ENCODE measurements at regions of chr5 and their contacts with region 1.

Region 1: DNA sequence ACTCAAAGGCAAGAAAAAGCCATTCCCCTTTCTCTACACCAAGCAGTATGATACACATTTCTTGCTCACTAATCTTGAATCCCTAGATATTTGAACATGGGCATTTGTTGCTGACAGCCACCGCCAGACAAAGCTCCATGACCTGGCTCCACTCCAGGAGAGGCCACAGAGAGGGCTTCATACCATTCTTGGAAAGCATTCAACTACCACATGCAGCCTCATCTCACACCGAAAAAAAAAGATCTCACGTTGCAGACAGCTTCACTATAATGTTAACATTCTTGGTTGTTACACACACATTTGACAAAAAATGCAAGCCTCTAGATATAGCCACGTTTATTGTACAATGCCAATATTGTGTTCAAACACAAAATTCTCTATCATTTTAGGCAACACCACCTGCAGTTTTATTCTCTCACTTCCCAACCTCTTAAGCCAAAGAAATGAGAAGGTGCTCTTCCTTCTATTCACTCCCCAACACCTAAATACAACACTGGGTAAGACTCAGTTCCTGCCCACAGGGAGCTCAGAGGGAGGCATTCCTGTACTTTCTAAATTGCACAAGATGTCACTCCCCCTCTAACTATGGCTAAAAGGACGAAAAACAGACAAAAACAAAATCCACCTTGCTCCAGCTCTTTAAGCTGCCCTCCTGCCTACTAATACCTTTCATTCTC is 222.4 kb downstream of the TSSK1B start:
- DNase-seq: peak in 4 of 5 donors; percentile 43 to 72 (median 66)
- ATAC-seq: peak in 2 of 4 donors; percentile 30 to 67
- H3K4me3 ChIP-seq: no peak overlapping the region
- H3K27ac ChIP-seq: peak overlapping the region in 4 of 12 donors; percentile 5 to 47 (median 20)
- H3K4me1 ChIP-seq: peaks cover 5 to 77% (median 41%) of the 10 kb centered on the region in 12 donors
- H3K27me3 ChIP-seq: no peaks in the 10 kb centered on the region
- CTCF ChIP-seq: no peak
- POLR2A ChIP-seq: no peak

Region 2: DNA sequence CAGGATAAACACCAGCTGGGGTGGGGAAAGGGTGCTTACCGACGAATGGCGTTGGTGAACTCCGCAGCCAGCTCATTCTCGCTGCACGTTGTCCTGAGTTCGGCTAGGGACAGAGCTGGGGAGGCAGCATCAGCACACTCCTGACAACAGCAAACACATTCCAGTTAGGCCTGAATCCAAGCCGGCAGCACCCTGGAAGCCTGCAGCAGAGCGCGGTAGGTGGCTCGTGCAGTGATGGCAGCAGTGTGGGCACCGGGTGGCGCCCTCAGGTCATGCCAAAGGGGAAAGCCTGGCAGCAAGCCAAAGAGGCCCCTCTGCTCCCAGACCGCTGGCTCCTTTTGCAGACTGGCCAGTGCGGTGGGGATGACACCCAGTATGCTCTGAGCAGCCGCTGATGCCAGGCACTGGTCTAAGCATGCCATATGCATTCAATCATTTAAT is 168.9 kb before region 1 on chr5:
- intact Hi-C with region 1: loop called in 1 of 10 experiments (anchors 5 kb)
- DNase-seq: peak; percentile 70 to 86 (median 81)
- ATAC-seq: peak; percentile 95 to 97 (median 96)
- H3K4me3 ChIP-seq: no peak overlapping the region
- H3K27ac ChIP-seq: peak overlapping the region in 8 of 12 donors; percentile 26 to 61 (median 42)
- H3K4me1 ChIP-seq: peaks cover 0 to 29% (median 14%) of the 10 kb centered on the region in 12 donors
- H3K27me3 ChIP-seq: no peaks in the 10 kb centered on the region
- CTCF ChIP-seq: peak; percentile 21 to 59 (median 36)
- POLR2A ChIP-seq: no peak

Region 3: GRCh38 chr5:113250341-113250953 is 38.1 kb after region 1 on chr5:
- intact Hi-C with region 1: loop called in 2 of 10 experiments (anchors 5 kb)
- DNase-seq: peak in 4 of 5 donors; percentile 48 to 63 (median 56)
- ATAC-seq: peak; percentile 32 to 81 (median 74)
- H3K4me3 ChIP-seq: no peak overlapping the region
- H3K27ac ChIP-seq: peak overlapping the region; percentile 20 to 79 (median 56)
- H3K4me1 ChIP-seq: peaks cover 18 to 86% (median 50%) of the 10 kb centered on the region in 12 donors
- H3K27me3 ChIP-seq: no peaks in the 10 kb centered on the region
- CTCF ChIP-seq: no peak
- POLR2A ChIP-seq: no peak

Region 4: DNA sequence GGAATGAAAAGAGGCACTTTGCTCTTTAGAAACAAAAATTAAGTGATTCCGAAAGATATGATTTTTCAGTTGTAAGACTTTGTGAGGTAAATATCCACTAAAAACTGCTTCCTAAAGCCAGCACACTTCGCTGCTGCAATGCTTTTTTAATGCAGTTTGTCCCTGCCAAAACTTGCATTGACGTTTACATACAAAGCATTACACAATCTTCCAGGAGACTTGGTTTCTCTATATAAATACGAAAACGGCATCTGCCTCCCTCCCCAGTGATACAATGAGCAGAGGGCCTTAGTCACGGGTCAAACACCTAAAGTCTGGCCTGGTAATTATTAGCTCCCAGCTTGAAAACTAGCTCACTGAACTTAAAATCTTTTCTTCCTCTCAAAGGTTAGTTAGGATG is 51.7 kb after region 1 on chr5:
- intact Hi-C with region 1: no loop called
- DNase-seq: no peak
- ATAC-seq: no peak
- H3K4me3 ChIP-seq: no peak overlapping the region
- H3K27ac ChIP-seq: no peak overlapping the region
- H3K4me1 ChIP-seq: peaks cover 0 to 31% (median 19%) of the 10 kb centered on the region in 12 donors
- H3K27me3 ChIP-seq: no peaks in the 10 kb centered on the region
- CTCF ChIP-seq: no peak
- POLR2A ChIP-seq: no peak